ENCODE measurements at regions of chr9 and their contacts with region 1.

Region 1: DNA sequence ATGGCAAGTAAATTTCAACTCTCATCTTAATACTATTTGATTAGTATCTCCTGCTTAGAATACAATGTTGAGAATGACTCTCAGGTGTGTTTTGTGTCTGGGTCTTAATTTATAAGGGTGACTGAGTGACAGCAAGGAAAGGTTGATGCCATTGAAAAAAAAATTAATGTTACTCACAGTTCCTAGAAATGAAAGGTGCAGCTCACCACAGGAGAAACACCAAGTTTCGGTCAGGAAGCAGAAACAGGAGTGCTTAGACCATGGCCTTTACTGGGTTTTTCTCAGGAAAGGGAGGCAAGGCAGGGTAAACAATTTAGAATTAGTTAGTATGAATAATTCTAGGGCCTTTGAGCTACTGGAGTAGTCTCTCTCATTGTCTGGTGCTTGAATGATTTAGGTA is 159.2 kb upstream of the C9orf72 start:
- DNase-seq: no peak
- H3K4me3 ChIP-seq: no peak overlapping the region
- H3K27ac ChIP-seq: no peak overlapping the region
- H3K4me1 ChIP-seq: no peaks in the 10 kb centered on the region
- H3K27me3 ChIP-seq: no peaks in the 10 kb centered on the region
- CTCF ChIP-seq: no peak

Region 2: GRCh38 chr9:27659001-27659400 is 73.5 kb before region 1 on chr9:
- CTCF ChIA-PET with region 1: no interaction called
- dilution Hi-C with region 1: no loop called
- in situ Hi-C with region 1: no loop called
- intact Hi-C with region 1: no loop called
- DNase-seq: no peak
- H3K4me3 ChIP-seq: no peak overlapping the region
- H3K27ac ChIP-seq: no peak overlapping the region
- H3K4me1 ChIP-seq: peaks cover 3% of the 10 kb centered on the region
- H3K27me3 ChIP-seq: no peaks in the 10 kb centered on the region
- CTCF ChIP-seq: no peak

Region 3: GRCh38 chr9:27673641-27674040 is 58.9 kb before region 1 on chr9:
- CTCF ChIA-PET with region 1: no interaction called
- dilution Hi-C with region 1: no loop called
- in situ Hi-C with region 1: no loop called
- intact Hi-C with region 1: no loop called
- DNase-seq: no peak
- H3K4me3 ChIP-seq: no peak overlapping the region
- H3K27ac ChIP-seq: no peak overlapping the region
- H3K4me1 ChIP-seq: no peaks in the 10 kb centered on the region
- H3K27me3 ChIP-seq: no peaks in the 10 kb centered on the region
- CTCF ChIP-seq: no peak

Region 4: GRCh38 chr9:27701587-27701986 is 30.9 kb before region 1 on chr9:
- CTCF ChIA-PET with region 1: no interaction called
- dilution Hi-C with region 1: no loop called
- in situ Hi-C with region 1: no loop called
- intact Hi-C with region 1: no loop called
- DNase-seq: no peak
- H3K4me3 ChIP-seq: no peak overlapping the region
- H3K27ac ChIP-seq: no peak overlapping the region
- H3K4me1 ChIP-seq: no peaks in the 10 kb centered on the region
- H3K27me3 ChIP-seq: peaks cover 3% of the 10 kb centered on the region
- CTCF ChIP-seq: no peak

Region 5: GRCh38 chr9:28073270-28073669 is 340.8 kb after region 1 on chr9:
- CTCF ChIA-PET with region 1: no interaction called
- dilution Hi-C with region 1: no loop called
- in situ Hi-C with region 1: loop called (anchors 5 to 25 kb)
- intact Hi-C with region 1: no loop called
- DNase-seq: peak; percentile 32
- H3K4me3 ChIP-seq: no peak overlapping the region
- H3K27ac ChIP-seq: no peak overlapping the region
- H3K4me1 ChIP-seq: no peaks in the 10 kb centered on the region
- H3K27me3 ChIP-seq: peaks cover 2% of the 10 kb centered on the region
- CTCF ChIP-seq: peak; percentile 49 to 65

Measured in mammary epithelial cell (primary cell).